ENCODE measurements at regions of chr22 and their contacts with region 1.

Region 1: DNA sequence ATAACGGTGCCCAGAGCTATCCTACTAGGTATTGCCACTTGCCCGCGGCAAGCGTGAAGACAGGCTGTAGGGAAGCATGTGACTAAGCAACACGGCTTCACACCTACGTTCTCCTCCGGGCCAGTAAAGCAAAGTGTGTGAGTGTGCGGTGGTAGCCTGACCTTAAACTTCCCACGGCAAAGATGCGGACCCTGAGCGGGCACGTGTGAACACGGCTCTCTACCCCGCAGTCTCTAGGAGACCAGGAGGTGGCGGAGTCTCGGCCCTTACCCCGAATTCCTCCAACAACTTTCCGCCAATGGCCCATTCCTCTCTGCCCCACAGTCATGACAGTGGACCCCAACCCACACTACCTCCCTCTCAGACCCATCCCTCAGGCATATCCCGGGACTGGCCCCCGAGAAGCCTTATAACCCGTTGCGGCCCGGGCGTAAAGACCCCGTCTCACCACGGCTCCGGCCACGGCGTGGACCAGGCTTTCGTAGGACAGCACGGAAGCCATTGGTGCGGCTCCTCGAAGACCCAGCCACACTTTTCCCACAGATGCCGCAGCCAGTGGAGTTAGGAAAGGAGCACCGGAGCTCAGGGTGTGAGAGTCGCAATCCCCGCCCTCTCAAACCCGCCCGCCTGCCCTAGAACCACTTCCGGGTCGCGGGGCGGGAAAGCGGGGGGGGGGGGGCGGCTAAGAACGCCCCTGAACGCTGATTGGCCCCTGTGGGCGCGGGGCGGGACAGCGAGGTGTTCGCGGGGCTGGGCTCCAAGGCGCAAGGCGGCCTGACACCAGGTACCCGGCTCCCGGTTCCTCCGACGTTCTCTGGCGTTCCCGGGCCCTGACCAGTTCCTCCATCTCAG is at the start of gene SLC25A17:
- DNase-seq: peak; percentile 83
- H3K4me3 ChIP-seq: peak within 1 kb of the TSS; percentile 76 to 90 (median 84)
- H3K27ac ChIP-seq: peak within 1 kb of the TSS; percentile 56
- H3K4me1 ChIP-seq: peaks cover 17% of the 10 kb centered on the region
- H3K27me3 ChIP-seq: no peaks in the 10 kb centered on the region
- CTCF ChIP-seq: peak in 1 of 2 donors; percentile 47
- total RNA-seq, gene SLC25A17: 24.8 to 31.6 TPM

Region 2: GRCh38 chr22:40862537-40862936 is 43.6 kb after region 1 on chr22:
- CTCF ChIA-PET with region 1: no interaction called
- dilution Hi-C with region 1: no loop called
- in situ Hi-C with region 1: no loop called
- intact Hi-C with region 1: no loop called
- DNase-seq: no peak
- H3K4me3 ChIP-seq: no peak overlapping the region
- H3K27ac ChIP-seq: no peak overlapping the region
- H3K4me1 ChIP-seq: peaks cover 12% of the 10 kb centered on the region
- H3K27me3 ChIP-seq: no peaks in the 10 kb centered on the region
- CTCF ChIP-seq: no peak

Region 3: DNA sequence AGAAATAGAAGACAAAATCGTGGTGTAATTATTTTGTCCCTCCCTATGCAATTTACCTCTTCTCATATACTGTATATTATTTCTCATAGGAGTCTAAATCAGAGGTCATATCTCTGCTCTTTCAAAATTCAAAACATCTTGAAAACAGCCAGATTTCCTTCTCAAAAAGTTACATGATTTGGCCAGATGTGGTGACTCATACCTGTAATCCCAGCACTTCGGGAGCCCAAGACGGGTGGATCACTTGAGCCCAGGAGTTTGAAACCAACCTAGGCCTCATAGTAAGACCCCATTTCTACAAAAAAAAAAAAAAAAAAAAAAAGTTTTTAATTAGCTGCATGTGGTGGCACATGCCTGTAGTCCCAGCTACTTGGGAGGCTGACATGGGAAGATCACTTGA is 71.9 kb after region 1 on chr22:
- CTCF ChIA-PET with region 1: no interaction called
- dilution Hi-C with region 1: loop called (anchors 5 kb)
- in situ Hi-C with region 1: no loop called
- intact Hi-C with region 1: no loop called
- DNase-seq: no peak
- H3K4me3 ChIP-seq: no peak overlapping the region
- H3K27ac ChIP-seq: no peak overlapping the region
- H3K4me1 ChIP-seq: peaks cover 12% of the 10 kb centered on the region
- H3K27me3 ChIP-seq: no peaks in the 10 kb centered on the region
- CTCF ChIP-seq: no peak

Region 4: DNA sequence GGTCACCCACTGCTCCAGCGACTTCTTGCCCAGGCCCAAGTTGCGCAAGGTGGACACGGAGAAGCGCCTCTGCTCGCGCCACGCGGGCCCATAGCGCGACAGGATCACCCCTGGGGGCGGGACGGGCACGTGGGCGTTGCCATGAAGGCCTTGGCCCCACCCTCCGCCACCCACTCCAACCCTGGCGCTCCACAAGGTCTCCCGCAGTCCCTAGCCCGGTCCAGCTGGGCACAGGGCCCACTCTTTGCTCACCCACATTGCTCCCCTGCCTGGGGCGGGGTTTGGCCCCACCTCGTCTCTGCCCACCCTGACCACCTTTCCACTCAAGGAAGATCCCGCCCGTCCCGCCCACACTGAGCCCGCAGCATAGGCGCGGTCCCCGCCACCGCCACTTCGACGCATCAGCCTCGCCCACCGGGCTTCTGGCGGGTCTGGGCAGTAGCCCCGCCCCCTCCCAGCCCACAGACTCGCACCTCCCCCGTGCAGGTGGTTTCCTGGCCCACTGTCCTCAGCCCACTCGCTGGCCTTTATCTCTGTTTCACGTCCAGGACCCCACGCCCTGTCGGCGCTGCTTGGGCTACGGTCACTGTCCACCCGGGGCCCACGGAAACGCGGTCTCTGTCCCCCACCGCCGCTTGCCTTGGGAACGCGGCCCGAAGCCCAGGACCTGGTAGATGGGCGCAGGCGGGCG is 1323.9 kb after region 1 on chr22:
- CTCF ChIA-PET with region 1: no interaction called
- dilution Hi-C with region 1: no loop called
- in situ Hi-C with region 1: no loop called
- intact Hi-C with region 1: no loop called
- DNase-seq: no peak
- H3K4me3 ChIP-seq: no peak overlapping the region
- H3K27ac ChIP-seq: no peak overlapping the region
- H3K4me1 ChIP-seq: no peaks in the 10 kb centered on the region
- H3K27me3 ChIP-seq: no peaks in the 10 kb centered on the region
- CTCF ChIP-seq: no peak

Measured in mammary epithelial cell (primary cell).